ENCODE measurements at regions of chr17 and their contacts with region 1.

Region 1: DNA sequence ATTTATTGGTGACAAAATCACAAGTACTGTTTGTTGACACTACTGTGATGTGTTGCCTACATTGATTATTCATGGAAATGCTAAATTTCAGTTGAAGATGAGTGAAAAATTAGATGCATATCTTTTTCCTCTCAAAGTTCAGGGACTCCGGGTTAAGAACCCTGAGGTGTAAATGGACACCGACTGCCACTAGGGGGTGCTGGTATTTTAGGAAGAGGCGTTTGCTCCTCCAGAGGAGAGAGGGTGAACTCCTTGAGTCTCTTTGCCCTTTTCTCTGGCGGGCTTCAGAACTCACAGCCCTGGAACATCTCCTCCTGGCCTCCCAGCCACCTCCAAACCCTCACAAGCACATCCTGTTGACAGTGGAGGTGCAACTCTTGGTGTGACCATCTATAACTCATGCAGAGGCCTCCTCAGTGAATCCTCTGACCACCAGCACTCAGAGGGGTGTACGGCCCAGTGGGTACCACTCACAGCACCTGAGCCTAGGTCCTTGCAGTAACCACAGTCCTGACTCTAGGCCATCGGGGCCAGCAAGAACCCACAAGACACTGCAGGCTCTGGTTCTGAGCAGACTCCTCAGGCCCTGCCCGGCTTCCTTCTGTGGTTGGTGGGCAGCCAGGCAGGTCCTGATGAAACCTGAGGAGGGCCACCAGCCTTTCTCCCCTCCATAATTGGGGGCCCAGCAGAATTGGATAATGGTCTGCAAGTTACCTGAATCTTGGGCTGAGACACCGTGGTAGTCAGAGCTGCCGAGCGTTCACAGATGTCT is 26.2 kb upstream of the PIK3R5 start:
- DNase-seq: peak; percentile 70 to 86
- H3K4me3 ChIP-seq: no peak overlapping the region
- H3K27ac ChIP-seq: no peak overlapping the region
- H3K4me1 ChIP-seq: no peaks in the 10 kb centered on the region
- H3K27me3 ChIP-seq: no peaks in the 10 kb centered on the region
- CTCF ChIP-seq: peak in 5 of 7 experiments; percentile 53 to 88 (median 70)
- EP300 ChIP-seq: no peak
- POLR2A ChIP-seq: no peak

Region 2: GRCh38 chr17:8894673-8895578 is 96.8 kb before region 1 on chr17:
- intact Hi-C with region 1: no loop called
- DNase-seq: peak; percentile 70 to 91
- H3K4me3 ChIP-seq: no peak overlapping the region
- H3K27ac ChIP-seq: no peak overlapping the region
- H3K4me1 ChIP-seq: peaks cover 0 to 11% (median 7%) of the 10 kb centered on the region in 4 donors
- H3K27me3 ChIP-seq: peaks cover 0 to 11% (median 0%) of the 10 kb centered on the region in 3 donors
- CTCF ChIP-seq: peak in 5 of 7 experiments; percentile 58 to 84 (median 75)
- EP300 ChIP-seq: no peak
- POLR2A ChIP-seq: no peak

Region 3: GRCh38 chr17:9291912-9292560 is 300.3 kb after region 1 on chr17:
- intact Hi-C with region 1: loop called (anchors 10 kb)
- DNase-seq: peak; percentile 42 to 80
- H3K4me3 ChIP-seq: no peak overlapping the region
- H3K27ac ChIP-seq: peak overlapping the region in 4 of 5 donors; percentile 46 to 80 (median 71)
- H3K4me1 ChIP-seq: peaks cover 3 to 24% (median 15%) of the 10 kb centered on the region in 4 donors
- H3K27me3 ChIP-seq: no peaks in the 10 kb centered on the region
- CTCF ChIP-seq: peak in 5 of 7 experiments; percentile 40 to 73 (median 65)
- EP300 ChIP-seq: no peak
- POLR2A ChIP-seq: no peak

Region 4: GRCh38 chr17:9522074-9522473 is 530.4 kb after region 1 on chr17:
- intact Hi-C with region 1: loop called (anchors 10 kb)
- DNase-seq: peak in 1 of 2 donors; percentile 79
- H3K4me3 ChIP-seq: no peak overlapping the region
- H3K27ac ChIP-seq: no peak overlapping the region
- H3K4me1 ChIP-seq: peaks cover 0 to 13% (median 5%) of the 10 kb centered on the region in 4 donors
- H3K27me3 ChIP-seq: no peaks in the 10 kb centered on the region
- CTCF ChIP-seq: peak in 3 of 7 experiments; percentile 18 to 31 (median 27)
- EP300 ChIP-seq: no peak
- POLR2A ChIP-seq: no peak